Ovary (tissue), 10 donors: ENCODE measurements at regions of chr22 and their contacts with region 1.

Region 1: GRCh38 chr22:19970479-19971275 is 29.1 kb upstream of the TXNRD2 start:
- DNase-seq: peak; percentile 49 to 83 (median 71)
- H3K4me3 ChIP-seq: no peak overlapping the region
- H3K27ac ChIP-seq: no peak overlapping the region
- H3K4me1 ChIP-seq: no peaks in the 10 kb centered on the region
- H3K27me3 ChIP-seq: no peaks in the 10 kb centered on the region
- CTCF ChIP-seq: peak; percentile 63 to 87 (median 73)
- EP300 ChIP-seq: no peak
- POLR2A ChIP-seq: no peak

Region 2: GRCh38 chr22:19800761-19801244 is 169.9 kb before region 1 on chr22:
- intact Hi-C with region 1: no loop called
- DNase-seq: peak in 1 of 5 donors; percentile 14
- H3K4me3 ChIP-seq: no peak overlapping the region
- H3K27ac ChIP-seq: no peak overlapping the region
- H3K4me1 ChIP-seq: no peaks in the 10 kb centered on the region
- H3K27me3 ChIP-seq: no peaks in the 10 kb centered on the region
- CTCF ChIP-seq: no peak
- EP300 ChIP-seq: no peak
- POLR2A ChIP-seq: no peak

Region 3: GRCh38 chr22:20016734-20017621 is 46.3 kb after region 1 on chr22 and contains the start of gene ARVCF:
- intact Hi-C with region 1: loop called in 3 of 4 experiments (anchors 2 to 5 kb)
- DNase-seq: peak; percentile 86 to 94 (median 92)
- H3K4me3 ChIP-seq: peak within 1 kb of the TSS; percentile 57
- H3K27ac ChIP-seq: peak within 1 kb of the TSS in 1 of 2 donors; percentile 22
- H3K4me1 ChIP-seq: peaks cover 11% of the 10 kb centered on the region
- H3K27me3 ChIP-seq: no peaks in the 10 kb centered on the region
- CTCF ChIP-seq: peak in 2 of 3 donors; percentile 39 to 48
- EP300 ChIP-seq: no peak
- POLR2A ChIP-seq: no peak
- total RNA-seq, gene ARVCF: 9.0 to 23.8 (median 14.0) TPM

Region 4: DNA sequence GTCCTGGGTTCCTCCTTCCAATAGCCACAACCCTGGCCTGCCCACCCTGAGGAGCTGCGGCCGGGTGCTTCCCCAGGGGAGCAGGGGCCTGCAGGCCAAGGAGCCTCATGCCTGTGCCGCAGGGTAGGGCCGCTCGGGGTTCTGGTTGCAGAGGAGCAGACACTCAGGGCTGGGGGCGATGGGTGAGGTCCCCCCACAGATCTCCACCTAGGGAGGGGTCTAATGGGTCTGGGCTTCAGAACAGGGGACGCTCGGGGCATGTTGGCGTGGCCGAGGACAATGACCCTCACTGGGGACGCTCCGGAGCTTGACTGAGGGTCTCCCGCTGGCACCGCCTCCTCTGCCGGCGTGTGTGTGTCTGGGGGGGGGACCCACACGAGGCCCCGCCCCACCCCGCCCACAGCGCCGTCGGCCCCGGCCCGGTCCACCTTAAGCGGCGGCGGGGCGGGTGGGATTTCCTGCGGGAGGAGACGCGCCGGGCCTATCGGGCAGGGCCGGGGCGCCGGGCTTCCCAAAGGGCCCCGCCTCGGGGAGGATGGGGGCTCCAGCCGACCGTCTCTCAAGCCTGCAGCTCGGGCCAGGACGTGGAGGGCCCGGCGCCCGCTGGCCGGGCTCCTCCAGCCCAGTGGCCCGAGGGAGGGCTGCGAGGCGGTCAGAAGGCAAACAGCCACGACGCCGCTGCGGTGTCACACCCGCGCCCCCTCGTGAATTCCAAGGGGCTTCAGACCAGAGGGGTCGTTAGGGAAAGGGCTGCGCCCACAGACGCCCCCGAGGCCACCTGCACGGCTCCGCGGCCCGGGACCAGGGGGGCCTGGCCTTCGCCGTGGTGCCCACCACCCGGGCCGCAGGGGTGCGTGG is 160.3 kb after region 1 on chr22:
- intact Hi-C with region 1: loop called in 1 of 4 experiments (anchors 10 kb)
- DNase-seq: peak; percentile 82 to 90 (median 84)
- H3K4me3 ChIP-seq: peak overlapping the region; percentile 99
- H3K27ac ChIP-seq: peak overlapping the region; percentile 85 to 94
- H3K4me1 ChIP-seq: peaks cover 7% of the 10 kb centered on the region
- H3K27me3 ChIP-seq: no peaks in the 10 kb centered on the region
- CTCF ChIP-seq: no peak
- EP300 ChIP-seq: no peak
- POLR2A ChIP-seq: no peak

Region 5: DNA sequence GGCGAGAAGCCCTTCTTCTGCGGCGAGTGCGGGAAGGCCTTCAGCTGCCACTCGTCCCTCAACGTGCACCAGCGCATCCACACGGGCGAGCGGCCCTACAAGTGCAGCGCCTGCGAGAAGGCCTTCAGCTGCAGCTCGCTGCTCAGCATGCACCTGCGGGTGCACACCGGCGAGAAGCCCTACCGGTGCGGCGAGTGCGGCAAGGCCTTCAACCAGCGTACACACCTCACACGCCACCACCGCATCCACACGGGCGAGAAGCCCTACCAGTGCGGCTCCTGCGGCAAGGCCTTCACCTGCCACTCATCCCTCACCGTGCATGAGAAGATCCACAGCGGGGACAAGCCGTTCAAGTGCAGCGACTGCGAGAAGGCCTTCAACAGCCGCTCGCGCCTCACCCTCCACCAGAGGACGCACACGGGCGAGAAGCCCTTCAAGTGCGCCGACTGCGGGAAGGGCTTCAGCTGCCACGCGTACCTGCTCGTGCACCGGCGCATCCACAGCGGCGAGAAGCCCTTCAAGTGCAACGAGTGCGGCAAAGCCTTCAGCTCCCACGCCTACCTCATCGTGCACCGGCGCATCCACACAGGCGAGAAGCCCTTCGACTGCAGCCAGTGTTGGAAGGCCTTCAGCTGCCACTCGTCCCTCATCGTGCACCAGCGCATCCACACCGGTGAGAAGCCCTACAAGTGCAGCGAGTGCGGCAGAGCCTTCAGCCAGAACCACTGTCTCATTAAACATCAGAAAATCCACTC is 435.4 kb after region 1 on chr22:
- intact Hi-C with region 1: loop called in 1 of 4 experiments (anchors 10 kb)
- DNase-seq: no peak
- H3K4me3 ChIP-seq: no peak overlapping the region
- H3K27ac ChIP-seq: no peak overlapping the region
- H3K4me1 ChIP-seq: no peaks in the 10 kb centered on the region
- H3K27me3 ChIP-seq: no peaks in the 10 kb centered on the region
- CTCF ChIP-seq: no peak
- EP300 ChIP-seq: no peak
- POLR2A ChIP-seq: no peak